ENCODE measurements at regions of chr9 and their contacts with region 1.

Region 1: GRCh38 chr9:136424750-136425362 is 14.4 kb downstream of the PMPCA start:
- DNase-seq: no peak
- H3K4me3 ChIP-seq: no peak overlapping the region
- H3K27ac ChIP-seq: no peak overlapping the region
- H3K4me1 ChIP-seq: no peaks in the 10 kb centered on the region
- H3K27me3 ChIP-seq: no peaks in the 10 kb centered on the region
- CTCF ChIP-seq: no peak

Region 2: GRCh38 chr9:136410500-136411287 is 14.2 kb before region 1 on chr9 and contains the starts of genes ENTR1 and PMPCA:
- CTCF ChIA-PET with region 1: interaction called, 10 read pairs
- POLR2A ChIA-PET with region 1: no interaction called
- intact Hi-C with region 1: no loop called
- DNase-seq: peak; percentile 77 to 92
- H3K4me3 ChIP-seq: peak within 1 kb of the TSS; percentile 94
- H3K27ac ChIP-seq: peak within 1 kb of the TSS; percentile 51; the same call in 1 of the 2 replicates
- H3K4me1 ChIP-seq: peaks cover 17% of the 10 kb centered on the region; the same call in 1 of the 2 replicates
- H3K27me3 ChIP-seq: no peaks in the 10 kb centered on the region
- CTCF ChIP-seq: no peak
- total RNA-seq, gene ENTR1: 67.9 and 82.9 TPM in 2 replicates
- total RNA-seq, gene PMPCA: 78.1 and 86.5 TPM in 2 replicates

Region 3: DNA sequence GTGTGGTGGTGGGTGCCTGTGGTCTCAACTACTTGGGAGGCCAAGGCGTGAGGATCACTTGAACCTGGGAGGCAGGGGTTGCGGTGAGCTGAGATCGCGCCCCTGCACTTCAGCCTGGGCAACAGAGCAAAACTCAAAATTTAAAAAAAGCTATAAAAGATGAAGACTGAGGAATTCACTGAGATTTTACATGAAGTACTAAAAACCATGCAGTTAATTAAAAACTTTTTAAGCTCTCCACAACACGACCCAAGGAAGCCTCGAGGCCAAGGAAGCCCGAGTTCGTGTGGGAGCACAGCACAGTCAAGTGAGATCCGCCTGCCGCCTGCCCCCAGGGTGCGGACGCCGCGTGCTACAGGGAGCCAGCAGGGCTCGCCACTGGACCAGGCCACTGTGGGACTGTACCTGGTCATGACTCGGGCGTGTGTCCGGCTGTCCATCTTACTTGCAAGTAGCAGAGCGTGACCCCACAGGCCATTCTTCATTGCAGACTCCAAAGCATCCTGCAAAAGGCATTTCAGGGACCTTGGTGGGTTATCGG is 36.0 kb after region 1 on chr9:
- CTCF ChIA-PET with region 1: no interaction called
- POLR2A ChIA-PET with region 1: interaction called, 10 read pairs
- intact Hi-C with region 1: no loop called
- DNase-seq: no peak
- H3K4me3 ChIP-seq: no peak overlapping the region
- H3K27ac ChIP-seq: no peak overlapping the region
- H3K4me1 ChIP-seq: no peaks in the 10 kb centered on the region
- H3K27me3 ChIP-seq: no peaks in the 10 kb centered on the region
- CTCF ChIP-seq: no peak

Measured in PC-9 (cell line).